CD4-positive, alpha-beta T cell (primary cell): ENCODE measurements at regions of chr9 and their contacts with region 1.

Region 1: GRCh38 chr9:134171316-134172197 is 7.2 kb upstream of the RNU6ATAC start:
- DNase-seq: no peak
- ATAC-seq: no peak
- H3K4me3 ChIP-seq: no peak overlapping the region
- H3K4me3 Mint-ChIP-seq: no peak overlapping the region
- H3K27ac ChIP-seq: no peak overlapping the region
- H3K27ac Mint-ChIP-seq: no peak overlapping the region
- H3K4me1 ChIP-seq: peaks cover 3% of the 10 kb centered on the region
- H3K4me1 Mint-ChIP-seq: no peaks in the 10 kb centered on the region
- H3K27me3 ChIP-seq: no peaks in the 10 kb centered on the region
- H3K27me3 Mint-ChIP-seq: no peaks in the 10 kb centered on the region
- CTCF ChIP-seq: no peak

Region 2: GRCh38 chr9:134217832-134218629 is 46.5 kb after region 1 on chr9:
- CTCF ChIA-PET with region 1: no interaction called
- POLR2A ChIA-PET with region 1: no interaction called
- intact Hi-C with region 1: loop called in 1 of 2 experiments (anchors 2 kb)
- DNase-seq: peak in 3 of 14 experiments; percentile 13 to 23 (median 22)
- ATAC-seq: no peak
- H3K4me3 ChIP-seq: no peak overlapping the region
- H3K4me3 Mint-ChIP-seq: no peak overlapping the region
- H3K27ac ChIP-seq: no peak overlapping the region
- H3K27ac Mint-ChIP-seq: no peak overlapping the region
- H3K4me1 ChIP-seq: no peaks in the 10 kb centered on the region
- H3K4me1 Mint-ChIP-seq: no peaks in the 10 kb centered on the region
- H3K27me3 ChIP-seq: no peaks in the 10 kb centered on the region
- H3K27me3 Mint-ChIP-seq: no peaks in the 10 kb centered on the region
- CTCF ChIP-seq: no peak

Region 3: GRCh38 chr9:134231330-134231745 is 59.8 kb after region 1 on chr9:
- CTCF ChIA-PET with region 1: no interaction called
- POLR2A ChIA-PET with region 1: no interaction called
- intact Hi-C with region 1: no loop called
- DNase-seq: no peak
- ATAC-seq: no peak
- H3K4me3 ChIP-seq: no peak overlapping the region
- H3K4me3 Mint-ChIP-seq: no peak overlapping the region
- H3K27ac ChIP-seq: no peak overlapping the region
- H3K27ac Mint-ChIP-seq: no peak overlapping the region
- H3K4me1 ChIP-seq: no peaks in the 10 kb centered on the region
- H3K4me1 Mint-ChIP-seq: no peaks in the 10 kb centered on the region
- H3K27me3 ChIP-seq: no peaks in the 10 kb centered on the region
- H3K27me3 Mint-ChIP-seq: no peaks in the 10 kb centered on the region
- CTCF ChIP-seq: no peak

Region 4: GRCh38 chr9:134282138-134282650 is 110.6 kb after region 1 on chr9:
- CTCF ChIA-PET with region 1: no interaction called
- POLR2A ChIA-PET with region 1: no interaction called
- intact Hi-C with region 1: no loop called
- DNase-seq: no peak
- ATAC-seq: no peak
- H3K4me3 ChIP-seq: no peak overlapping the region
- H3K4me3 Mint-ChIP-seq: no peak overlapping the region
- H3K27ac ChIP-seq: no peak overlapping the region
- H3K27ac Mint-ChIP-seq: no peak overlapping the region
- H3K4me1 ChIP-seq: no peaks in the 10 kb centered on the region
- H3K4me1 Mint-ChIP-seq: no peaks in the 10 kb centered on the region
- H3K27me3 ChIP-seq: peaks cover 0 to 3% of the 10 kb centered on the region in 2 experiments
- H3K27me3 Mint-ChIP-seq: peaks cover under 1% of the 10 kb centered on the region
- CTCF ChIP-seq: no peak

Region 5: GRCh38 chr9:134443168-134444037 is 271.8 kb after region 1 on chr9:
- CTCF ChIA-PET with region 1: interaction called, 16 read pairs
- POLR2A ChIA-PET with region 1: interaction called, 6 read pairs
- intact Hi-C with region 1: loop called (anchors 1 kb)
- DNase-seq: peak; percentile 76 to 94 (median 86)
- ATAC-seq: peak; percentile 100
- H3K4me3 ChIP-seq: no peak overlapping the region
- H3K4me3 Mint-ChIP-seq: no peak overlapping the region
- H3K27ac ChIP-seq: no peak overlapping the region
- H3K27ac Mint-ChIP-seq: peak overlapping the region; percentile 80
- H3K4me1 ChIP-seq: peaks cover 25% of the 10 kb centered on the region
- H3K4me1 Mint-ChIP-seq: peaks cover 25% of the 10 kb centered on the region
- H3K27me3 ChIP-seq: peaks cover 6 to 9% of the 10 kb centered on the region in 2 experiments
- H3K27me3 Mint-ChIP-seq: peaks cover 5% of the 10 kb centered on the region
- CTCF ChIP-seq: peak; percentile 91

Region 6: DNA sequence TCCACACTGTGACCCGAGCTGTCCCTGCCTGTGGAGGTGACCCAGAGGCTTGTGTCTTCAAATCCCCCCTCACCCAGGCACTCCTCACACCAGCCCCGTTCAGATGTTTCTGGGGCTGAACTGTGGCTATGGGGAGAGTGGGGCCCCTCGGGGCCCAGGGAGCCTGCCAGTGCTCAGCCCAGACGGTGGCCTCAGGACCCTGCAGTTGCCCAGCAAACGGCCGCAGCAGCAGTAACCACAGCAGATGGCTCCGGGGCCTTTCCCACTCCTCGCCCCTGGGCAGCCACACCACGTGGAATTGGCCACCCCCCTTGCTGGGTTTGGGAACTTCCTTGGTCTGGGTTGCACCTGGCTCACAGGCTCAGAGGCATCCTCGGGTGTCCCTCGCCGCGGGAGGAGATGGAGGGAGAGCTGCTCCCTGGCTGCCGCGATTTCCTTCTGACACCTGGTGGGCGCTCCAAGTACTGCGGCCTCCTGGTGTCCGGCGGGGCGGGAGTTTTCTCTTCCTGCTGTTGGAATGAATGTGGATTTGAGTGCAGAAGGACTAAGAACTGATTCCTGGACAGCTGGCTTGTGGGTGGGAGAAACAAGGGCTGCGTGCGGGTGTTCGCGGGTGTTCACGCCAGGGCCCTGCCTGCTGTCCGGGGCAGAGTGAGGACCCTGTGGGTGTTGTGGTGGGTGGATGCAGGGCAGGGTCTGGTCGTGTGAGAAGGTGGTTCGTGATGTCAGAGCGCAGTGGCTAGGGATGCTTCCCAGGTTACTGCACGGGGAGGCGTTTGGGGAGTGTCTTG is 567.5 kb after region 1 on chr9:
- CTCF ChIA-PET with region 1: no interaction called
- POLR2A ChIA-PET with region 1: no interaction called
- intact Hi-C with region 1: loop called in 1 of 2 experiments (anchors 5 kb)
- DNase-seq: peak in 12 of 14 experiments; percentile 6 to 56 (median 20)
- ATAC-seq: no peak
- H3K4me3 ChIP-seq: no peak overlapping the region
- H3K4me3 Mint-ChIP-seq: no peak overlapping the region
- H3K27ac ChIP-seq: no peak overlapping the region
- H3K27ac Mint-ChIP-seq: no peak overlapping the region
- H3K4me1 ChIP-seq: no peaks in the 10 kb centered on the region
- H3K4me1 Mint-ChIP-seq: no peaks in the 10 kb centered on the region
- H3K27me3 ChIP-seq: peaks cover 0 to 3% of the 10 kb centered on the region in 2 experiments
- H3K27me3 Mint-ChIP-seq: peaks cover 16% of the 10 kb centered on the region
- CTCF ChIP-seq: peak; percentile 62

Region 7: DNA sequence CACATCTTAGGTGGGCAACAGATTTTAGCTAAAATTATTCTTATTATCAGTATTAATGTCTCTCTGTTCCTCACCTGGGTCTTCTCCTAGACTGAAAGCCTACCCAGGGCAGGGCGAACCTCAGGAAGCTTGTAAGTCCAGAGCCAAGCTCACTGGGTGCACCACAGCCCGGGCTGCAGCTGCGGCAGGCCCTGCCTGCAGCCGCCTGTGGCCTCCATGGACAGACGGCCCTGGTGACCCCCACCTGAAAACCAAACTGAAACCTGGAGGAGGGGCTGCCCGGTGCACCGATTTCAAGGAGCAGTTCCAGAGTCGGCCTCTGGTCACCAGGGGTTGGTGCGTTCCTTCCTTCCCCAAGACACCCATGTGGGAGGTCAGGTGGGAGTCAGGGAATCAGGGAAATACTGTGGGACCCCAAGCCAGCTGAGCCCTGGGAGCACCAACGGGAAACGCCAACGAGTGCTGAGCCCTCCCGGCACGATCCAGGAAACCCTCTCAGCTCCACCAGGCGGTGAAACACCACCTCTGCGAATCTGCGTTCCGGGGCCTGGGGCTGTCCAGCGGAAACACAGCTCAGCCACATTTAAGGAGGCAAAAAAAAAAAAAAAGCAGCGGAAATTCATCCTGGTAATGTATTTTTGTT is 1239.4 kb after region 1 on chr9:
- CTCF ChIA-PET with region 1: no interaction called
- POLR2A ChIA-PET with region 1: no interaction called
- intact Hi-C with region 1: loop called in 1 of 2 experiments (anchors 5 kb)
- DNase-seq: peak in 1 of 14 experiments; percentile 6
- ATAC-seq: no peak
- H3K4me3 ChIP-seq: no peak overlapping the region
- H3K4me3 Mint-ChIP-seq: no peak overlapping the region
- H3K27ac ChIP-seq: no peak overlapping the region
- H3K27ac Mint-ChIP-seq: no peak overlapping the region
- H3K4me1 ChIP-seq: peaks cover 6% of the 10 kb centered on the region
- H3K4me1 Mint-ChIP-seq: no peaks in the 10 kb centered on the region
- H3K27me3 ChIP-seq: peaks cover 0 to 5% of the 10 kb centered on the region in 2 experiments
- H3K27me3 Mint-ChIP-seq: peaks cover 17% of the 10 kb centered on the region
- CTCF ChIP-seq: no peak